PC-3 (cell line): ENCODE measurements at regions of chr9 and their contacts with region 1.

Region 1: DNA sequence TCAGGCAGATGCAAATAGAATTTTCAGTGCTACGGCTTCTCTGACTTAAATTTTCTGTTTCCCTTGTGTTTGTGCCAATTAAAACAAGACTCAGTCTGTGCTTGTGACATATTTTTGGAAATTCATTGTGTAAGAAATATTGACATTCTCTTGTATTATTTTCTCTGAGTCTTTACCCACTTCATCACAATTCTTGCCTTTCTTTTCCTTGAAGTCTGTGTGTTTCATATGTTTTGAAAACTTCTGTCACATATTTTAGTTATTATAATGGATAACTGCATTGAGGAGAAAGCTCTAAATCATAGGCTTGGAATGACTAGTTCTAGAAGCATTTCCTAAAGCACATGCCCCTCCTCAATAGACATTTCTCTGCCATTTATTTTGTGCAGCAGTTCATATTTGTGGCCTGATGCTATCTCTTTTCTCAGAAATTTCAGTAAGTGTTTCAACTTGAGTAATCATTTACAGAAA is 206.6 kb downstream of the PALM2AKAP2 start:
- DNase-seq: peak; percentile 69
- ATAC-seq: peak; percentile 91
- H3K4me3 ChIP-seq: no peak overlapping the region; the same call in 1 of the 2 replicates
- H3K27ac ChIP-seq: peak overlapping the region; percentile 42
- H3K4me1 ChIP-seq: peaks cover 10% of the 10 kb centered on the region
- H3K27me3 ChIP-seq: no peaks in the 10 kb centered on the region
- CTCF ChIP-seq: no peak

Region 2: GRCh38 chr9:109912726-109913460 is 73.7 kb before region 1 on chr9:
- CTCF ChIA-PET with region 1: no interaction called
- POLR2A ChIA-PET with region 1: no interaction called
- intact Hi-C with region 1: loop called (anchors 2 kb)
- DNase-seq: peak; percentile 22
- ATAC-seq: peak; percentile 2; the same call in 1 of the 2 replicates
- H3K4me3 ChIP-seq: 0 out of 2 replicates have a peak overlapping the region, but pooled peaks have one; percentile 12
- H3K27ac ChIP-seq: peak overlapping the region; percentile 99
- H3K4me1 ChIP-seq: peaks cover 40% of the 10 kb centered on the region
- H3K27me3 ChIP-seq: no peaks in the 10 kb centered on the region
- CTCF ChIP-seq: no peak

Region 3: GRCh38 chr9:109953813-109954497 is 32.6 kb before region 1 on chr9:
- CTCF ChIA-PET with region 1: no interaction called
- POLR2A ChIA-PET with region 1: no interaction called
- intact Hi-C with region 1: no loop called
- DNase-seq: no peak
- ATAC-seq: no peak
- H3K4me3 ChIP-seq: no peak overlapping the region
- H3K27ac ChIP-seq: no peak overlapping the region
- H3K4me1 ChIP-seq: no peaks in the 10 kb centered on the region
- H3K27me3 ChIP-seq: no peaks in the 10 kb centered on the region
- CTCF ChIP-seq: peak; percentile 42

Region 4: DNA sequence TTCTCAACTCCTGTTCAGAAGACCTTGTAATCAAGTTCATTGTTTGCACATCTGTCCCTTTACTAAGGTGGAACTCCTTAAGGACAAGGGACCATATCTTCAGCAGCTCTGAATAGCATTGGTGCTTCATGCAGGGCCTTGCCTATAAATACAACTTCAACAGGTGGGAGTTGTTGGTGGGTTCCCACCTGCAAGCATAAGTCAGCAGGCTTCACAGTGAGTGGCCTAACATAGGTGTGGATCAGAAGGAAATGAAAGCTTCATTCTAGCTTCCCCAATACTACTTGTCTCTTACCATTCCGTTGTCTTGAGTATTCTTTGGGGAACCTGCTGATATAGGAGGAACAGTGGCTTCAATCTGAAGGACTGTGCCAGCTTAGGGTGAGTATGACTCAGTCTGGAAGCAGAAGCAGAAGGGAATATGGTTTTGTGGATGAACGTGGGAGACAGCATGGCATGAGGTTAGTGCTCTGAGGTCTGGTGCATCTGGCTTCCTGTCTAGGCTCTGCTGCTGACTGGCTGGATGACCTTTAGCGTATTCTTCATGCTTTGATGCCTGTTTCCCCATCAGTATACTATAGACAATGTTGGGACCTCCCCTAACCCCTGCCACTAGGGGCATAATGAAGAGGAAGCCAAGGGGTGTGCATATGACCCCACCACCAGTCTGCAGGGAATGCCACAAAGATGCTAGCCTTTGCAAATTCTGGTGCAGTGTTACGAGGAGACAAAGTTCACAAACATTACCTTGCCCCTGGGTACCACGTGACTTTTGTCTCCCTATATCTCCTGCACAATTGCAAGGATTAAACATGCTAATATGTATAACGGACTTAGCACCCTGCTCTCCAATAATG is 14.3 kb before region 1 on chr9:
- CTCF ChIA-PET with region 1: no interaction called
- POLR2A ChIA-PET with region 1: no interaction called
- intact Hi-C with region 1: no loop called
- DNase-seq: no peak
- ATAC-seq: no peak
- H3K4me3 ChIP-seq: no peak overlapping the region
- H3K27ac ChIP-seq: no peak overlapping the region
- H3K4me1 ChIP-seq: no peaks in the 10 kb centered on the region
- H3K27me3 ChIP-seq: no peaks in the 10 kb centered on the region
- CTCF ChIP-seq: no peak